Naive thymus-derived CD4-positive, alpha-beta T cell (primary cell): ENCODE measurements at regions of chr9 and their contacts with region 1.

Region 1: DNA sequence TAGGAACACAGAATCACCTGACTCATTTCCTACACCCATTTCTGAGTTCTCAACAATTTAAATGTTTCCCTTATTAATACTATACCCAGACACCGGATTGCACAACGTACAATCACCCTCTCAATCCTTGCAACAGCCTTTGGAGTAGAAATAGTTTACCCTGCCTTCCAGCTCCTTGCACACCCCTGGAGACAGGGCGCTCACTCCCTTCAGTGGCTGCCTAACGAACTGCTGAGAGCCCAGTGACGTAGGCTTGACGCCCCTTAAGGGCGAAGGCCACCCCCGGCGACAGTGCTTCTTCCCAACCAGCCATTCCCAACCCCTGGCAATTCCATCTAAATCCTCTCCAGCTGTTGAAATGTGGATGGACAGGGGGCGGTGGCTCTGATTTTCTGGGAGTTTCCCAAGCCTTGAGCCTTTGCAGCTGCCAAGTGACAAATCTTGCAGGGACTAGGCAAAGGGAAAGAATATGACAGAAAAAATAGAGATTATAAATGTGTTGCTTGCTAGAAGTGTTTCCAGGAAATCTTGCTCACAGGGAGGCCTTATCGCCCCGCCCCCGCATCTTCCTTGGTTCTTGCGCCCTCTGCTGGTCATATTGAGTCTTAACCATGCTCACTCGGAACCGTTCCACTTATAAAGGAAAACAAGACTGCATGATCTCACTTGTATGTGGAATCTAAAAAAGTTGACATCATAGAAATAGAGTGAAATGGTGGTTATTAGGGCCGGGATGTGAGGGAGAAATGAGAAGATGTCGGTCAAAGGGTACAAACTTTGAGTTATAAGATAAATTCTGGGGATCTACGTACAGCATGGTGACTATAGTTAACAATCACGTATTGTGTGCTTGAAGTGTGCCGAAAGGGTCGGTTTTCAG is 7.6 kb upstream of the BARX1 start:
- DNase-seq: peak; percentile 64 to 83 (median 78)
- ATAC-seq: peak; percentile 90
- H3K4me3 ChIP-seq: no peak overlapping the region
- H3K4me3 Mint-ChIP-seq: peak overlapping the region in 6 of 10 donors; percentile 0 to 35 (median 2)
- H3K27ac ChIP-seq: no peak overlapping the region
- H3K27ac Mint-ChIP-seq: no peak overlapping the region
- H3K4me1 ChIP-seq: peaks cover 9 to 20% of the 10 kb centered on the region in 2 donors
- H3K4me1 Mint-ChIP-seq: peaks cover 26 to 44% (median 28%) of the 10 kb centered on the region in 7 donors
- H3K27me3 ChIP-seq: peaks cover 0 to 25% of the 10 kb centered on the region in 2 donors
- H3K27me3 Mint-ChIP-seq: peaks cover 45 to 67% (median 55%) of the 10 kb centered on the region in 5 donors

Region 2: DNA sequence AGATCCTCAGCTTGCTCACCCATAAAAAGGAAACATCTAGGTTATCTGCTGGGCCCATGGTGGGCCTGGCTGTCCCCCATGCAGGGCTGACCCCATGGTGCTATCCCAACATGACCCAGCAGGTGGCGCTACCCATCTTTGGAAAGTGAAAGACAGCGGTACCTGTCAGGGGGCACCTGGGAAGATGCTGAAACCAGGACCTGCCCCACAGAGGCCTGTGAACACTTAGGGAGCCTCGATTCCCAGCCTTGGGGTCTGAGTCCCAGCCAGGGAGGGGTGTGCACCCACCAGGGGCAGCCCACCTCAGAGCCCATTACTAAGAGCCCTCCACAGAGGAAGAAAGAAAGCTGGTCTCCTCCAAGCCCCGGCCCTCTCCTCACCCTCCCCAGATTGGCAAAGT is 1246.2 kb before region 1 on chr9:
- CTCF ChIA-PET with region 1: no interaction called
- POLR2A ChIA-PET with region 1: no interaction called
- intact Hi-C with region 1: loop called in 1 of 2 experiments (anchors 5 kb)
- DNase-seq: peak; percentile 53 to 84 (median 70)
- ATAC-seq: peak; percentile 86
- H3K4me3 ChIP-seq: no peak overlapping the region
- H3K4me3 Mint-ChIP-seq: no peak overlapping the region
- H3K27ac ChIP-seq: no peak overlapping the region
- H3K27ac Mint-ChIP-seq: peak overlapping the region in 5 of 9 donors; percentile 1 to 53 (median 36)
- H3K4me1 ChIP-seq: peaks cover 9 to 14% of the 10 kb centered on the region in 2 donors
- H3K4me1 Mint-ChIP-seq: peaks cover 9 to 21% (median 16%) of the 10 kb centered on the region in 7 donors
- H3K27me3 ChIP-seq: no peaks in the 10 kb centered on the region
- H3K27me3 Mint-ChIP-seq: no peaks in the 10 kb centered on the region

Region 3: DNA sequence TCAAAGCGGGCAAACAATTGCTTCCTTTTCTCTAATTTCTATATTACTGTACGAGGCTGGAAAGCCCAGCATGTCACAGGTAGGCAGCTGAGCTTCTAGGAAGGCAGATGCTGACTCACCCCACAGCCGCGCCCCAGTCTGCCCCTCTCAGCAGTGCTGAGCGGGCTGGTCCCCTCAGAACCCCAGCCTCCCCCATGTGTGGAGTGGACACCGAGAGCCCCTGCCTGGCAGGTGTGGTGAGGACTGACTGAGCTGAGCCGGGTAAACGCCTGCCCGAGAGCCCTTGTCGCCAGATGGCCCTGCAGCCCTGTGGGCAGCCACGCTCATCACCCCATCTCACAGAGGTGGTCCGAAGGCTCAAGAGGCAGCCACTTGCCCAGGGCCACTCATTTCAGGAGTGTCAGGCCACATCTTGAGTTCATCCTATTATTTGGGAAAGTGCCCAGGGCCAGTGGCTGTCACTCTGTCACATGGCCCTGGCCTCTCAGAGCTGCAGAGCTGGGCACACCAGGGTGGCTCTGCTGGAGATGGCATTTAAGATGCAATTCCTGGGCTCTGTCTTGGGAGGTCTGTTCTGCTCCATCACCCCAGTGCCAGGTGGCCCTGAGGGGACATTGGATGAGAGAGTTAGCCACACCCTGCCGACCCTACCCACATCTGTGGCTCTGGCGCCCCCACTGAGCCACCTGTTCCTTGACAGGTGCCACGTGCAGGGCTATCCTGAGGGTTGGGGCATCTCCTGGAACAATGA is 854.3 kb before region 1 on chr9:
- CTCF ChIA-PET with region 1: no interaction called
- POLR2A ChIA-PET with region 1: no interaction called
- intact Hi-C with region 1: loop called in 1 of 2 experiments (anchors 5 kb)
- DNase-seq: peak in 2 of 9 donors; percentile 6 to 59
- ATAC-seq: no peak
- H3K4me3 ChIP-seq: no peak overlapping the region
- H3K4me3 Mint-ChIP-seq: peak overlapping the region in 2 of 10 donors; percentile 39 to 56
- H3K27ac ChIP-seq: peak overlapping the region; percentile 10
- H3K27ac Mint-ChIP-seq: peak overlapping the region in 8 of 9 donors; percentile 38 to 82 (median 62)
- H3K4me1 ChIP-seq: peaks cover 15 to 34% of the 10 kb centered on the region in 2 donors
- H3K4me1 Mint-ChIP-seq: peaks cover 34 to 53% (median 48%) of the 10 kb centered on the region in 7 donors
- H3K27me3 ChIP-seq: no peaks in the 10 kb centered on the region
- H3K27me3 Mint-ChIP-seq: no peaks in the 10 kb centered on the region

Region 4: DNA sequence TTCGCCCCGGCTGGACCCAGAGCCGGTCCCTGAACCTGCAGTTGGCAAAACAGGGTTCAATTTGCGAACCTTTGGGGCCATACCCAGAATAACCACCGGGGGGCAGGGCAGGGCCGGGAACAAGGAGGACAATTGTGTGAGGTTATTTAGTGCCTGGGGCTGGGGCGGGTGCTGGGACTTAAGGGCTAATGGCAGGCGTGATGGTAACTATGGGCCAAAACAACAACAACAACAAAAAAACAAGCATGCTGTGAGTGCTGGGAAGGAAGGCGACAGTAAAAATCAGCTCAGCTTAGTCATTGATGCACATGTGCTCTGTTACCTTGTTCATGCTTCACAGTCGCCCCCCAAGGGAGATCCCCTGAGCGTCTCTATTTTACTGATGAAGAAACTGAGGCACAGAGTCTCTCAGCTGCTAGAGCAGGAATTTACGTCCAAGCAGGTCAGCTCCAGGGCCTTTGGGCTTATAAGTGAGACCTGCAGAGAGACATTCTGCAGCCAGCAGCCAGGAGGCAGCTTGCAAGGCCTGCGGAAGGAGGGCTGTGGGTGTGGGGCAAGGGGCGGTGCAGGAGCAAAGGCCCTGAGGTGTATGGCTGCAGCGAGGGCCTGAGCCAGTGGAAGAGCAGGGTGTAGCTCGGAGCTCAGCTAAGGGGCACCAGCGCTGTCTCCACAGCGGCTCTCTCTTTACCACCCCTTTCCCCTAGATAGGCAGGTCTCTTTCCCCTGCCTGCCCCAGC is 280.4 kb before region 1 on chr9:
- CTCF ChIA-PET with region 1: interaction called, 15 read pairs
- POLR2A ChIA-PET with region 1: interaction called, 3 read pairs
- intact Hi-C with region 1: loop called in 1 of 2 experiments (anchors 1 kb)
- DNase-seq: peak; percentile 23 to 64 (median 49)
- ATAC-seq: peak; percentile 62
- H3K4me3 ChIP-seq: no peak overlapping the region
- H3K4me3 Mint-ChIP-seq: no peak overlapping the region
- H3K27ac ChIP-seq: no peak overlapping the region
- H3K27ac Mint-ChIP-seq: no peak overlapping the region
- H3K4me1 ChIP-seq: no peaks in the 10 kb centered on the region
- H3K4me1 Mint-ChIP-seq: peaks cover 0 to 3% (median 0%) of the 10 kb centered on the region in 7 donors
- H3K27me3 ChIP-seq: no peaks in the 10 kb centered on the region
- H3K27me3 Mint-ChIP-seq: peaks cover 0 to 26% (median 11%) of the 10 kb centered on the region in 5 donors

Region 5: GRCh38 chr9:94213511-94214124 is 250.8 kb after region 1 on chr9:
- CTCF ChIA-PET with region 1: no interaction called
- POLR2A ChIA-PET with region 1: no interaction called
- intact Hi-C with region 1: loop called in 1 of 2 experiments (anchors 1 kb)
- DNase-seq: peak; percentile 39 to 76 (median 69)
- ATAC-seq: peak; percentile 97
- H3K4me3 ChIP-seq: no peak overlapping the region
- H3K4me3 Mint-ChIP-seq: peak overlapping the region in 6 of 10 donors; percentile 9 to 37 (median 14)
- H3K27ac ChIP-seq: no peak overlapping the region
- H3K27ac Mint-ChIP-seq: peak overlapping the region in 1 of 9 donors; percentile 76
- H3K4me1 ChIP-seq: no peaks in the 10 kb centered on the region
- H3K4me1 Mint-ChIP-seq: peaks cover 3 to 6% (median 4%) of the 10 kb centered on the region in 7 donors
- H3K27me3 ChIP-seq: no peaks in the 10 kb centered on the region
- H3K27me3 Mint-ChIP-seq: peaks cover 12 to 28% (median 21%) of the 10 kb centered on the region in 5 donors

Region 6: DNA sequence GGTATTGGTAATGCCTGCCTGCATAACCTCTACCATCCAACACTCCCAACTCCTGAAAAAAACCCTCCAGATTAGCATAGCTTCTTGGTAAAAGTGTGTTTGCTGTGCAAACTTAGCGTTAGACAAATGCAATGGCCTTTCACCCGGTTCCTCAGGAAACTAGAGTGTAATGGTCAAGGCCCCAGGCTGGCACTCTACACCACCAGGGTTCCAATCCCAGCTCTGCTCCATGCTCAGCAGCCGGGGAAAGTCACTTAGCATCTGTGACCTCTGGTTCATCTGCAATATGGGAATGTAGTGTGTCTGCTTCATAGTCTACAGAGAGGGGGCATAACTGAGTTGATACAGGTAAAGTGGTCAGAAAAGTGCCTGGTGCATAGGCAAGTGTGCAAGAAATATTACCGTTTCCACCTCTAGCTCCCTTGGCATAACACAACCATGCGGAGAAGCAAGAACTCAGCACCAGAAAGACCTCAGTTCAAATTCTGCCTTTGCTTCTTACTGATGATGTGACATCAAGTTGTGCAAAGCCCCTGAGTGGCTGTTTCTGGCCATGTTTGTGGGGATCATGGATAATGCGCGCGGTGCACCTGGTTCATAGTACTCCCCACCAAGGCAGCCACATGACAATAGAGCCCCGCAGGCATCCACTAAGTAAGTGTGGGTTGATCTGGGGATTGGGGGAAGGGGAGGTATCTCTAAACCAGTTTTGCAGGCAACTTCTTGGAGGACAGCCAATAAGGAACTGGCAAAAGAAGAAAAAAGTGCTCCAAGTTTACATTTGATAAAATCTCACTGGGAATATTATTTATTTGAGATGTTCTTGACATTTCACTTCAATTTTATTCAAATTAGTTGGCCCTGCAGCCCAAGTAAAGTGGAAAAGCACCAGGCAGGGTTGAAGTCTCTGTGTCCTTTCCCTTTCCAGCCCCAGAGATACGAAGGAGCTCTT is 667.8 kb after region 1 on chr9:
- CTCF ChIA-PET with region 1: no interaction called
- POLR2A ChIA-PET with region 1: no interaction called
- intact Hi-C with region 1: no loop called
- DNase-seq: no peak
- ATAC-seq: no peak
- H3K4me3 ChIP-seq: no peak overlapping the region
- H3K4me3 Mint-ChIP-seq: no peak overlapping the region
- H3K27ac ChIP-seq: no peak overlapping the region
- H3K27ac Mint-ChIP-seq: no peak overlapping the region
- H3K4me1 ChIP-seq: no peaks in the 10 kb centered on the region
- H3K4me1 Mint-ChIP-seq: peaks cover 0 to 7% (median 0%) of the 10 kb centered on the region in 7 donors
- H3K27me3 ChIP-seq: no peaks in the 10 kb centered on the region
- H3K27me3 Mint-ChIP-seq: peaks cover 0 to 27% (median 0%) of the 10 kb centered on the region in 5 donors